Common myeloid progenitor, CD34-positive (primary cell): ENCODE measurements at regions of chr6 and their contacts with region 1.

Region 1: GRCh38 chr6:42532038-42532669 is 31.7 kb upstream of the UBR2 start:
- DNase-seq: peak; percentile 70 to 90 (median 90)
- H3K4me3 ChIP-seq: no peak overlapping the region
- H3K27ac ChIP-seq: no peak overlapping the region
- H3K4me1 ChIP-seq: no peaks in the 10 kb centered on the region
- H3K27me3 ChIP-seq: no peaks in the 10 kb centered on the region

Region 2: GRCh38 chr6:42315991-42316378 is 216.2 kb before region 1 on chr6:
- CTCF ChIA-PET with region 1: interaction called, 18 read pairs
- POLR2A ChIA-PET with region 1: no interaction called
- DNase-seq: no peak
- H3K4me3 ChIP-seq: no peak overlapping the region
- H3K27ac ChIP-seq: no peak overlapping the region
- H3K4me1 ChIP-seq: peaks cover 4 to 24% (median 8%) of the 10 kb centered on the region in 4 experiments
- H3K27me3 ChIP-seq: no peaks in the 10 kb centered on the region

Region 3: GRCh38 chr6:42520786-42521607 is 11.2 kb before region 1 on chr6:
- CTCF ChIA-PET with region 1: interaction called, 18 read pairs
- POLR2A ChIA-PET with region 1: no interaction called
- DNase-seq: peak; percentile 55 to 93 (median 89)
- H3K4me3 ChIP-seq: peak overlapping the region in 3 of 7 experiments; percentile 6 to 39 (median 23)
- H3K27ac ChIP-seq: no peak overlapping the region
- H3K4me1 ChIP-seq: peaks cover 7 to 15% (median 13%) of the 10 kb centered on the region in 4 experiments
- H3K27me3 ChIP-seq: no peaks in the 10 kb centered on the region